SK-N-SH (cell line): ENCODE measurements at regions of chr1 and their contacts with region 1.

Region 1: DNA sequence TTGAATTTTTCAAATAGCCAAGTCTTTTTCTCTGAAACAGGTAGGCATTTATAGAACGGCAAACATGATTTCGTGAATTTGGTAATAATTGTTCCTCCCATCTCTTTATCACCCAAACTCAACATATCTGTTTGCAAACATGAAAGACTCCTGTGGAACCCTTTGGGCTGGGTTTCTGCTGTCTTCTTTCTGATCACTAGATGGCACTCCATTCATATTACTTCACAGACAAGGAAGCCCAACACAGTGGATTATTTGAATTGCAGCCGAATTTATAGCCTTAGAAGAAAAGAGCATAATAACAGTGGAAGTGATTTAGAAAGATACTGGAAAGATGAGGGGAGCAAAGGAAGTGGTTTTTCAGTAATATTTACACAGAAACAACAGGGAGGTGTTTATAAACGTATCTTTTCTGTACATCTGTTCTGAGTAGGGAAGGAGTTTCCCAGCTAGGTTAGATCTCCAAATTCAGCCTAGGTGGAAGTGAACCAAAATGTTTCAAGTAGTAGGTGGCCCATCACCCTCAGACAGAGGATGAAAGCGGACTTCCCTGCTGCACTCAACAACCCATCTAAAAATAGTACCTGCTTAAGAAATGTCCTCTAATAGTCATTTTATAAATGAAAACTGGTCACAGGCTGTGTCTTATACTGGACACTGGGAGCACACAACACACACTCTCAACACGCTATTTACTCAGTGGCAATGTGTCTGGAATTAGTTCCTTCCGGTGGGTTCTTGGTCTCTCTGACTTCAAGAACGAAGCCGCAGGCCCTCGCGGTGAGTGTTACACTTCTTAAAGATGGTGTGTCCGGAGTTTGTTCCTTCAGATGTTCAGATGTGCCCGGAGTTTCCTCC is 67.6 kb downstream of the MAP3K21 start:
- DNase-seq: peak; percentile 52
- H3K4me3 ChIP-seq: no peak overlapping the region; a peak in 1 of 4 replicates
- H3K27ac ChIP-seq: no peak overlapping the region
- H3K4me1 ChIP-seq: peaks cover 0 to 5% of the 10 kb centered on the region in 2 experiments; a peak in 1 of 4 replicates
- H3K27me3 ChIP-seq: peaks cover 7% of the 10 kb centered on the region; the same call in 1 of the 2 replicates
- CTCF ChIP-seq: peak; percentile 91
- EP300 ChIP-seq: no peak
- RAD21 ChIP-seq: peak; percentile 97

Region 2: DNA sequence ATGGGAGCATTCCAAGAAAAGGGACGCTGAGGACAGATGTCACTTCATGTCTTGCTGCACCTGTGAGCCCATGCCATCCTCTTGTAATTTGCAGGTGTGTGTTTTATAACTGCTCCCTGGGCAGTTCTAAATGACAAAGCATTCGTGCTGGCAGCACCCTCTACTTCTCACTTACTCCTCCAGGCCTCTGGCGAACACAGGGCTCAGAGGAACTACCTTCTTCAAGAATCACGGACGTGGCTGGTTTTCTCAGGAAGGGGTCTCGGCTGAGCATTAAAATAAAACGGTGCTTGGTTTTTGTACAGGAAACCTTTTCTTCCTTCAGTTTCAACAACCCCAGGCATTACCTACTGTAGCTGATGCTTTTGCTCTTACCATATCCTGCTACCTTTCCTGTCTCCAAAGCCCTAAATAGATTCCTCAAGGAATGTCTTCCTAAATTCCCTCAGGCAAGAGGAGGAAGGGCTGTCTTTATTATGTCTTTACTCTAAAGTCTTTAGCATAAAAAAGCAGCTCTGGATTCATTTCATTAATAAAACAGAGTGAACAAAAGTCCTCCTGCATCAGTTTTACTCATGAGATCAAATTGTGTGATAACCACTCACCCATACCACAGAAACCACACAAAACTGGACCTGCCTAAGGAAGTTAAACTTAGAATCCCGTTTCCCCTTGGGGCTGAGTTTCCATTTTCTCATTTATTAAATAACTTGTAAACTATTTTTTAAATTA is 668.9 kb before region 1 on chr1:
- CTCF ChIA-PET with region 1: no interaction called
- POLR2A ChIA-PET with region 1: no interaction called
- DNase-seq: no peak
- H3K4me3 ChIP-seq: no peak overlapping the region
- H3K27ac ChIP-seq: no peak overlapping the region
- H3K4me1 ChIP-seq: no peaks in the 10 kb centered on the region
- H3K27me3 ChIP-seq: no peaks in the 10 kb centered on the region
- CTCF ChIP-seq: no peak
- EP300 ChIP-seq: no peak
- RAD21 ChIP-seq: no peak

Region 3: DNA sequence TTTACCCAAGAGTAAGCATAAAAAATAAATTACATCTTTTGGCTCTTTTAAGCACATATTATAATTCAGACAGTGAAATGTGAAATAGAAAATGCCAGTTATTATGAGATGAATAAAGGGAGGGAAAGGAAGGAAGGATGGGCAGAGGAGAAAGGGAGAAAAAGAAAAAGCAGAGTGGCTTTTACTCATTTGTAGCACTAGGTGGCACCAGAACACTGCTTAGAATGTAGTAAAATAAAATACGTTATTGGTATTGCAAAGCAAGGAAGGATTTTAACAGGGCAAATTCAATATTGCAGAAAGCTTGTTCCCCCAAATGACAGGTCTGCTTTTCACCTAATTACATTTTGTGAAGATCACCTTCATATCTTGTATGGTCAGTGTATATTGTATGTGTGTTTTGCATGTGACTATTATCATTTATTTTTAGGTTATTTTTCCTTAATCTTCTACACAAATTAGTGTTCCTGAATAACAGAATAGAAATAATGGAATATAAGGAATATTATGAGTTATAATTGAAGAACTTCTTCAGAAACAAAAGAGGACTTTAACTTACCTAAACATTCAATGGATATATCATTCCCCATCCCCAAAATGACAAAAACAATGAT is 90.5 kb before region 1 on chr1:
- CTCF ChIA-PET with region 1: interaction called, 11 read pairs
- POLR2A ChIA-PET with region 1: no interaction called
- DNase-seq: peak; percentile 29
- H3K4me3 ChIP-seq: no peak overlapping the region
- H3K27ac ChIP-seq: no peak overlapping the region
- H3K4me1 ChIP-seq: no peaks in the 10 kb centered on the region
- H3K27me3 ChIP-seq: no peaks in the 10 kb centered on the region
- CTCF ChIP-seq: peak; percentile 78
- EP300 ChIP-seq: no peak
- RAD21 ChIP-seq: peak; percentile 92

Region 4: GRCh38 chr1:233364695-233365539 is 30.2 kb before region 1 on chr1:
- CTCF ChIA-PET with region 1: interaction called, 17 read pairs
- POLR2A ChIA-PET with region 1: no interaction called
- DNase-seq: peak; percentile 34
- H3K4me3 ChIP-seq: no peak overlapping the region
- H3K27ac ChIP-seq: no peak overlapping the region
- H3K4me1 ChIP-seq: no peaks in the 10 kb centered on the region
- H3K27me3 ChIP-seq: no peaks in the 10 kb centered on the region
- CTCF ChIP-seq: peak; percentile 82
- EP300 ChIP-seq: no peak
- RAD21 ChIP-seq: peak; percentile 74

Region 5: DNA sequence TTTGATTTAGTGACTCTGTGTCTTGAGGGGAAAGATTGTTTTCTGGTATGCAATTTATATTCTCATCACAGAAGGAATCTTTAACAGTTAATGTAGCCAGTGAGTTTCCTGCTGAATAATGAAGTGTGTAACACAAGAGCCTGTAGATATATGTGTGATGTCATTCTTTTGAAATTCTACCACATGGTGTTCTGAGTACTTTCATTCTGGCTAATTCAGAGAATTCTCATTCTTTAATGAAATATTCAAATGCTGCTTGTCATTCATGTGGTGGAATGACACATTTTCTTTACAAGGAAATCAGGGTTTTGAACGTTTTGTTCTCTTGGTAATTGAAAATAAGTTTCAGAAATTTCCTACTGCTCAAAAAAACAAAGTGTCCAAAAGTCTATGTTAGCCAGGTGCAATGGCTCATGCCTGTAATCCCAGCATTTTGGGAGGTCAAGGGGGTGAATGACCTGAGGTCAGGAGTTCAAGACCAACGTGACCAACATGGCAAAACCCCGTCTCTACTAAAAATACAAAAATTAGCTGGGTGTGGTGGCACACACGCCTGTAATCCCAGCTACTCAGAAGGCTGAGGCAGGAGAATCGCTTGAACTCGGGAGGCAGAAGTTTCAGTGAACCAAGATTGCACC is 12.0 kb after region 1 on chr1:
- CTCF ChIA-PET with region 1: interaction called, 16 read pairs
- POLR2A ChIA-PET with region 1: no interaction called
- DNase-seq: no peak
- H3K4me3 ChIP-seq: no peak overlapping the region
- H3K27ac ChIP-seq: 0 out of 4 replicates have a peak overlapping the region, but pooled peaks of 1 of the 2 experiments have one; percentile 56
- H3K4me1 ChIP-seq: peaks cover 0 to 6% of the 10 kb centered on the region in 2 experiments; a peak in 1 of 4 replicates
- H3K27me3 ChIP-seq: no peaks in the 10 kb centered on the region
- CTCF ChIP-seq: no peak
- EP300 ChIP-seq: no peak
- RAD21 ChIP-seq: no peak

Region 6: GRCh38 chr1:233518349-233518748 is 123.3 kb after region 1 on chr1:
- CTCF ChIA-PET with region 1: no interaction called
- POLR2A ChIA-PET with region 1: no interaction called
- DNase-seq: peak; percentile 39
- H3K4me3 ChIP-seq: no peak overlapping the region; a peak in 1 of 4 replicates
- H3K27ac ChIP-seq: no peak overlapping the region
- H3K4me1 ChIP-seq: no peaks in the 10 kb centered on the region
- H3K27me3 ChIP-seq: no peaks in the 10 kb centered on the region
- CTCF ChIP-seq: peak; percentile 76
- EP300 ChIP-seq: no peak
- RAD21 ChIP-seq: peak; percentile 51

Region 7: GRCh38 chr1:233790662-233791375 is 395.7 kb after region 1 on chr1:
- CTCF ChIA-PET with region 1: interaction called, 10 read pairs
- POLR2A ChIA-PET with region 1: no interaction called
- DNase-seq: peak; percentile 69
- H3K4me3 ChIP-seq: no peak overlapping the region; a peak in 1 of 4 replicates
- H3K27ac ChIP-seq: no peak overlapping the region
- H3K4me1 ChIP-seq: no peaks in the 10 kb centered on the region
- H3K27me3 ChIP-seq: no peaks in the 10 kb centered on the region
- CTCF ChIP-seq: peak; percentile 94
- EP300 ChIP-seq: no peak
- RAD21 ChIP-seq: peak; percentile 96

Region 8: DNA sequence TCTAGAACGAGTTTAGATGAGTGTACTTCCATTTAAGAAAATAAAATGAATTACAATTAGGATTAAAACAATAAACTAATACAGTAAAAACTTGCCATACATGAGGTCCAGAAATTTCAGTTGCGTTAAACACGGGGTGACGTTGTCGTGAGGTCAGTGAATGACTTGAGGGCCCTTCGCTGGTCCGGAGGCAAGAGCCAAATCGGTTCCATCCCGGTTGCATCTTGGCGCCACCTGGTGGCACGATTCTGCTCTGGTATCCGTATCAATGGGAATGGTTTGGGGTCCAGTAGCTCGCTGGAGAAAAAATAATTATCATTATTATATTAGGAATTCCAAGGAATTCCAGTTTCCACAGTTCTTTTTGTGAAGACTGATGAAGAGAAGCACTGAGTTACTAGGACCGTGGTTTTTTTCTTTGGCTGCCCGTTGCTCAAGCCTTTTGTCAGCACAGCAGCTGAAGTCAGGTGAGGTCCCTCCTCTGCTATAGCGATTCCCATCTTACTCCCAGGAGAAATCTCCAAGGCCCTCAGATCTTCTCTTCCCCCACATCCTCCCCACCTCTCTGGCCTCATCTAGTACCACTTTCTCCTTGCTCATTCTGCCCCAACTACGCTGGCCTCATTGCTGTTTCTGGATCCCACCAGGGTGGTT is 670.8 kb after region 1 on chr1:
- CTCF ChIA-PET with region 1: interaction called, 27 read pairs
- POLR2A ChIA-PET with region 1: no interaction called
- DNase-seq: peak; percentile 70
- H3K4me3 ChIP-seq: no peak overlapping the region
- H3K27ac ChIP-seq: no peak overlapping the region
- H3K4me1 ChIP-seq: no peaks in the 10 kb centered on the region; a peak in 1 of 4 replicates
- H3K27me3 ChIP-seq: no peaks in the 10 kb centered on the region
- CTCF ChIP-seq: peak; percentile 89
- EP300 ChIP-seq: no peak
- RAD21 ChIP-seq: peak; percentile 76